CD8-positive, alpha-beta T cell (primary cell): ENCODE measurements at regions of chr1 and their contacts with region 1.

Region 1: GRCh38 chr1:156689035-156689952 is 12.1 kb upstream of the NES start:
- DNase-seq: peak; percentile 55 to 85 (median 77)
- ATAC-seq: peak; percentile 97
- H3K4me3 ChIP-seq: no peak overlapping the region
- H3K4me3 Mint-ChIP-seq: no peak overlapping the region
- H3K27ac ChIP-seq: no peak overlapping the region
- H3K27ac Mint-ChIP-seq: no peak overlapping the region
- H3K4me1 ChIP-seq: peaks cover 21% of the 10 kb centered on the region
- H3K4me1 Mint-ChIP-seq: peaks cover 25% of the 10 kb centered on the region
- H3K27me3 ChIP-seq: peaks cover 18 to 19% of the 10 kb centered on the region in 2 experiments
- H3K27me3 Mint-ChIP-seq: peaks cover 41% of the 10 kb centered on the region
- CTCF ChIP-seq: peak; percentile 84

Region 2: GRCh38 chr1:156612666-156613065 is 76.6 kb before region 1 on chr1:
- CTCF ChIA-PET with region 1: no interaction called
- POLR2A ChIA-PET with region 1: no interaction called
- intact Hi-C with region 1: no loop called
- DNase-seq: no peak
- ATAC-seq: no peak
- H3K4me3 ChIP-seq: no peak overlapping the region
- H3K4me3 Mint-ChIP-seq: no peak overlapping the region
- H3K27ac ChIP-seq: no peak overlapping the region
- H3K27ac Mint-ChIP-seq: no peak overlapping the region
- H3K4me1 ChIP-seq: peaks cover 8% of the 10 kb centered on the region
- H3K4me1 Mint-ChIP-seq: peaks cover 10% of the 10 kb centered on the region
- H3K27me3 ChIP-seq: peaks cover 0 to 7% of the 10 kb centered on the region in 2 experiments
- H3K27me3 Mint-ChIP-seq: peaks cover 21% of the 10 kb centered on the region
- CTCF ChIP-seq: no peak

Region 3: DNA sequence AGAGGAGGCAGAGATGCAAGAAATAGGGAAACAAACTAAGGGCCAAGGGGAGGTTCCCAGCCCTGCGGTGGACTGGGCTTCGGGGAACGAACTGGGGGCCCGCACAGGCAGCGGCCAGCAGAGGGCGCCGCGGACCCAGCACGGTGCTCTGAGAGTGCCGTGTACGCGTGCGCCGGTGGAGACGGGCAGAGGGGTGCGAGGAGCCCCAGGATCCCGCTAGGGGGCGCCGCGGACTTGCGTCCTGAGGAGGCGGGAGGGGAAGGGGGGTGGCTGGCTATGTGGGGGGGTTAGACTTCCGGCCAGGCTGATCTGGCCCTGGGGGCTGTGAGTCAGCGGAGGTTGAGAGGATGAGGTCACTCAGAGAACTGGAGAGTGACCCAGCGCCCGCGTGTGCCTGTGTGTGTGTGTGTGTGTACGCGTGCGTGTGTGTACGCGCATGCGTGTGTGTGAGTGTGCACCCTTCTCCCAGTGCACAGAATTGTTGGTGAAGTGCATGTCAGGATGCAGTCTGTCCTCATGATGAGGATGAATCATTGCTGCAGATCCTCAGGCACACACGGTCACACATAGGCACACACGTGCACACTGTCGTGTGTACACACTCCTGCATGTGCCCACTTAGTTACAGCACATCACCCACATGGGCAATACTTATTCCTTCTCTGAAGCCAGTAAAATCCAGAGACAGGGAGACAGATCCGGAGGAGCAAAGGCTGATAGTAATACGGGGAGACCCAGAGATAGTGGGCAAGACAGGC is 29.1 kb before region 1 on chr1:
- CTCF ChIA-PET with region 1: interaction called, 22 read pairs
- POLR2A ChIA-PET with region 1: interaction called, 3 read pairs
- intact Hi-C with region 1: no loop called
- DNase-seq: peak; percentile 74 to 94 (median 92)
- ATAC-seq: peak; percentile 91
- H3K4me3 ChIP-seq: no peak overlapping the region
- H3K4me3 Mint-ChIP-seq: peak overlapping the region; percentile 45
- H3K27ac ChIP-seq: peak overlapping the region in 1 of 2 experiments; percentile 47
- H3K27ac Mint-ChIP-seq: no peak overlapping the region
- H3K4me1 ChIP-seq: peaks cover 44% of the 10 kb centered on the region
- H3K4me1 Mint-ChIP-seq: peaks cover 44% of the 10 kb centered on the region
- H3K27me3 ChIP-seq: peaks cover 12 to 14% of the 10 kb centered on the region in 2 experiments
- H3K27me3 Mint-ChIP-seq: peaks cover 20% of the 10 kb centered on the region
- CTCF ChIP-seq: peak; percentile 95

Region 4: GRCh38 chr1:156677616-156678596 is 11.4 kb before region 1 on chr1:
- CTCF ChIA-PET with region 1: interaction called, 61 read pairs
- POLR2A ChIA-PET with region 1: no interaction called
- intact Hi-C with region 1: no loop called
- DNase-seq: peak in 4 of 9 experiments; percentile 18 to 65 (median 52)
- ATAC-seq: peak; percentile 38
- H3K4me3 ChIP-seq: peak overlapping the region in 1 of 2 experiments; percentile 0
- H3K4me3 Mint-ChIP-seq: peak overlapping the region; percentile 45
- H3K27ac ChIP-seq: no peak overlapping the region
- H3K27ac Mint-ChIP-seq: no peak overlapping the region
- H3K4me1 ChIP-seq: peaks cover 10% of the 10 kb centered on the region
- H3K4me1 Mint-ChIP-seq: peaks cover 13% of the 10 kb centered on the region
- H3K27me3 ChIP-seq: peaks cover 21 to 22% of the 10 kb centered on the region in 2 experiments
- H3K27me3 Mint-ChIP-seq: peaks cover 58% of the 10 kb centered on the region
- CTCF ChIP-seq: peak; percentile 27

Region 5: DNA sequence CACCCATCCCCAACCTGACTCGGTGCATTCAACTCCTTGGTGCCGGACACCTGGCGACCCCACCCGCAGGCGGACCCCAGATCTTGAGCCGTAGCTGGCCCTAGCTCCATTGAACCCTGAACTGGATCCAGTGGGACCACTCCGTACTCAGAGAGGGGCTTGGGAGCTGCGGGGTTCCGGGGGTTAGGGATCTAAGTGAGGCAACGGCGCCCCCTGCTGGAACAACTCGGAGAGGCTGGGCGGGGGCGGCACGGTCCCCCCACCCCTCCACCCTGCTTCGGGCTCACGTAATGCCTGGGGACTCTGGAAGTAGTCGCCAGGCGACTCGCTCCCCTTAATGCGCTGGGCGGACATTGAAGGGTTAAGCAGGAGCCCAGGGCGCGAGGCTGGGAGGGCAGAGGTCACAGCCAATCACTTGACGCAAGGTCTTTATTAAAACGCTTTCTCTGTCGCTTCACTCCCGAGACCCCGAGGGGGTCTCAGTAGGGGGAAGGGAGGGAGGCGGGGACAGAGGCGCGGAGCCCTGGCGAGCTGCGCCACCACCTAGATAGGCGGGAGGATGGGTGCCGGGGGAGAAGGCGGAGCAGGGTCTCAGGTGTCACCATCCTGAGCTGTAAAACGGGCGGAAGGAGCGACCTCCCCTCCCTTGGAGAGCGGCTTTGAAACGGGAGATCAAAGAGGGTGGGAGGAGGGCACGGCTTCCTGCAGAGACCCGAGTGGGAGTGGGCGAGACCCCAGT is 16.8 kb after region 1 on chr1:
- CTCF ChIA-PET with region 1: interaction called, 997 read pairs
- POLR2A ChIA-PET with region 1: interaction called, 8 read pairs
- intact Hi-C with region 1: loop called (anchors 1 kb)
- DNase-seq: peak; percentile 36 to 81 (median 68)
- ATAC-seq: peak; percentile 66
- H3K4me3 ChIP-seq: peak overlapping the region; percentile 52 to 89
- H3K4me3 Mint-ChIP-seq: peak overlapping the region; percentile 89
- H3K27ac ChIP-seq: peak overlapping the region; percentile 43 to 47
- H3K27ac Mint-ChIP-seq: peak overlapping the region; percentile 73
- H3K4me1 ChIP-seq: peaks cover 35% of the 10 kb centered on the region
- H3K4me1 Mint-ChIP-seq: peaks cover 32% of the 10 kb centered on the region
- H3K27me3 ChIP-seq: peaks cover 8 to 24% of the 10 kb centered on the region in 2 experiments
- H3K27me3 Mint-ChIP-seq: peaks cover 9% of the 10 kb centered on the region
- CTCF ChIP-seq: peak; percentile 82

Region 6: DNA sequence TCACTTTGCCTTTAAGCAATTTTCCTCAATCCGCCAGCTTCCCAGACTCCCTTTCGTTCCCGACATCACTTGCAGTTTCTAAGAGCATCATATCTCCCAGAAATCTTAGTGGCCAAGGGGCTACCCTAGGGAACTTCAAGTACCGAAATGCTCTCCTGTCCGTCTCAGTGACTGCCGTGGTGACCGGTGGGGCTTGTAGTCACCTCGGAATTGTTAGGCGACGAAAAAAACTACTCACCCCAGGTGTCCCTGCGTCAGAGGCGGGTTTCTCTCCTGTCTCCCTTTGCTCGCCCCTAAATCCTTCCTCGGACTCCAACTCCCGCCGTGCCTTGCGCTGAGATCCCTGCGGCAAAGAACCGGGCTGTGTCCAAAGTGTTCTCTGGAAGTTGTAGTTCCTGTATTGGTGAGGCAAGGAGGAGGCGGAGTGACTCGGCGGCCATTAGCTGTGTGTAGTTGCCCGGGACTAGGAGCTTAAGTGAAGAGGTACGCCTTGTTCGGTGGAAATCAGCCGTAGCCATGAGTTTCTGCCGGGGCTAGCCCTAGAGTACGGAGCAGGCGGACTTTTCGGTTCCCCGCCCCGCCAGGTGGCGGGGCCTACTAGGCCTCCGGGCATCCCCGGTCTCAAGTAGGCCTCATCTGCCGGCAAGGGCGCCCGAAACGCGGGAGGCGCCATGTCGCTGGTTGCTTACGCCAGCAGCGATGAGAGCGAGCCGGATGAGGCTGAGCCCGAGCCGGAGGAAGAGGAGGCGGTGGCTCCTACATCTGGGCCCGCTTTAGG is 78.0 kb after region 1 on chr1 and contains the start of gene PRCC:
- CTCF ChIA-PET with region 1: interaction called, 14 read pairs
- POLR2A ChIA-PET with region 1: interaction called, 3 read pairs
- intact Hi-C with region 1: loop called in 1 of 2 experiments (anchors 1 kb)
- DNase-seq: peak; percentile 93 to 100 (median 97)
- ATAC-seq: peak; percentile 90
- H3K4me3 ChIP-seq: peak within 1 kb of the TSS; percentile 66 to 69
- H3K4me3 Mint-ChIP-seq: no peak within 1 kb of the TSS
- H3K27ac ChIP-seq: peak within 1 kb of the TSS; percentile 87 to 90
- H3K27ac Mint-ChIP-seq: no peak within 1 kb of the TSS
- H3K4me1 ChIP-seq: peaks cover 29% of the 10 kb centered on the region
- H3K4me1 Mint-ChIP-seq: peaks cover 41% of the 10 kb centered on the region
- H3K27me3 ChIP-seq: no peaks in the 10 kb centered on the region
- H3K27me3 Mint-ChIP-seq: no peaks in the 10 kb centered on the region
- CTCF ChIP-seq: no peak
- total RNA-seq, gene PRCC: 55.6 to 58.4 TPM

Region 7: GRCh38 chr1:156860113-156860627 is 170.9 kb after region 1 on chr1:
- CTCF ChIA-PET with region 1: interaction called, 16 read pairs
- POLR2A ChIA-PET with region 1: no interaction called
- intact Hi-C with region 1: loop called in 1 of 2 experiments (anchors 1 kb)
- DNase-seq: peak in 8 of 9 experiments; percentile 47 to 78 (median 63)
- ATAC-seq: peak; percentile 70
- H3K4me3 ChIP-seq: peak overlapping the region; percentile 54 to 73
- H3K4me3 Mint-ChIP-seq: peak overlapping the region; percentile 77
- H3K27ac ChIP-seq: no peak overlapping the region
- H3K27ac Mint-ChIP-seq: peak overlapping the region; percentile 14
- H3K4me1 ChIP-seq: peaks cover 27% of the 10 kb centered on the region
- H3K4me1 Mint-ChIP-seq: peaks cover 25% of the 10 kb centered on the region
- H3K27me3 ChIP-seq: peaks cover 42 to 44% of the 10 kb centered on the region in 2 experiments
- H3K27me3 Mint-ChIP-seq: peaks cover 51% of the 10 kb centered on the region
- CTCF ChIP-seq: peak; percentile 79

Region 8: GRCh38 chr1:156901966-156902915 is 212.9 kb after region 1 on chr1:
- CTCF ChIA-PET with region 1: no interaction called
- POLR2A ChIA-PET with region 1: no interaction called
- intact Hi-C with region 1: no loop called
- DNase-seq: no peak
- ATAC-seq: no peak
- H3K4me3 ChIP-seq: no peak overlapping the region
- H3K4me3 Mint-ChIP-seq: no peak overlapping the region
- H3K27ac ChIP-seq: no peak overlapping the region
- H3K27ac Mint-ChIP-seq: no peak overlapping the region
- H3K4me1 ChIP-seq: no peaks in the 10 kb centered on the region
- H3K4me1 Mint-ChIP-seq: peaks cover 3% of the 10 kb centered on the region
- H3K27me3 ChIP-seq: peaks cover 0 to 3% of the 10 kb centered on the region in 2 experiments
- H3K27me3 Mint-ChIP-seq: peaks cover 16% of the 10 kb centered on the region
- CTCF ChIP-seq: no peak

Region 9: GRCh38 chr1:156927215-156928042 is 238.1 kb after region 1 on chr1:
- CTCF ChIA-PET with region 1: interaction called, 3 read pairs
- POLR2A ChIA-PET with region 1: no interaction called
- intact Hi-C with region 1: loop called (anchors 1 kb)
- DNase-seq: peak; percentile 25 to 74 (median 61)
- ATAC-seq: peak; percentile 80
- H3K4me3 ChIP-seq: peak overlapping the region in 1 of 2 experiments; percentile 20
- H3K4me3 Mint-ChIP-seq: no peak overlapping the region
- H3K27ac ChIP-seq: no peak overlapping the region
- H3K27ac Mint-ChIP-seq: no peak overlapping the region
- H3K4me1 ChIP-seq: peaks cover 16% of the 10 kb centered on the region
- H3K4me1 Mint-ChIP-seq: peaks cover 22% of the 10 kb centered on the region
- H3K27me3 ChIP-seq: peaks cover 37 to 43% of the 10 kb centered on the region in 2 experiments
- H3K27me3 Mint-ChIP-seq: peaks cover 67% of the 10 kb centered on the region
- CTCF ChIP-seq: no peak